OCI-LY7 (cell line): ENCODE measurements at regions of chr16 and their contacts with region 1.

Region 1: GRCh38 chr16:840561-841454 is 40.3 kb upstream of the GNG13 start:
- DNase-seq: no peak
- H3K4me3 ChIP-seq: no peak overlapping the region
- H3K27ac ChIP-seq: no peak overlapping the region
- H3K4me1 ChIP-seq: no peaks in the 10 kb centered on the region
- CTCF ChIP-seq: no peak

Region 2: DNA sequence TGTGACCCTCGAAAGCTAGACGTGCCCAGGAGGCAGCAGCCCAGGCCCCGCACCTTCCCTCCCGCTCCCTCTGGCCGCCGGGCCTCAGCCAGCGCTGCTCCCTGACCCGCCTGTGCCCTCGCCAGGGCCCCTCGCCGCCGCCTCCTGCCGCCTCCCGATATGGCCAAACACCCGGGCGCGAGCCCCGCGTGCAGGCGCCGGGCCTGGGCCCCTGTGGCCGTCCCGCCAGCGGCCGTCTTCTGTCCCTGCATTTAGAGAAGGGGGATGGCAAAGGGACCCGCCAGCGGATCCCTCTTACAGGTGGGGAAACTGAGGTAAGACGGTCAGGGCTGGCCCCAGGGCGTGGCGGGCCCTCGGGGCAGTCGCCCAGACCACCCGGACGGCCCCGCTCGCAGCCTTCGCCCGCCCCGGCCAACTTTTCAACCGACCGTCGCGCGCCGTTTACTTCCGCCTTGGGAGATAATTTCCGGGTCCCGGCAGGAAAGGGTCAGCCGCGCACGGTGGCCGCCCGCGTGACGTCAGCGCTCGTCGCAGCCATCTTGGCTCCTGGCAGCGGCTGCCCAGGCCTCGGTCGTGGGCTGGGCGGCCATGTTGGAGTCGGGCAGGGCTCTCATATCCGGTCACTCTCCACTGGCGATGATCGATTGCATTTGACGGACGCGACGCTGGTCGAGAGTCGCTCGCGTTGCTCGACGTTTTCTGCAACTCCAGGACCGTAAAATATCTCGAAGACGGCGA is 33.3 kb before region 1 on chr16:
- CTCF ChIA-PET with region 1: interaction called, 17 read pairs
- POLR2A ChIA-PET with region 1: no interaction called
- intact Hi-C with region 1: no loop called
- DNase-seq: peak; percentile 84
- H3K4me3 ChIP-seq: peak overlapping the region; percentile 69
- H3K27ac ChIP-seq: peak overlapping the region; percentile 41
- H3K4me1 ChIP-seq: no peaks in the 10 kb centered on the region
- CTCF ChIP-seq: no peak

Region 3: DNA sequence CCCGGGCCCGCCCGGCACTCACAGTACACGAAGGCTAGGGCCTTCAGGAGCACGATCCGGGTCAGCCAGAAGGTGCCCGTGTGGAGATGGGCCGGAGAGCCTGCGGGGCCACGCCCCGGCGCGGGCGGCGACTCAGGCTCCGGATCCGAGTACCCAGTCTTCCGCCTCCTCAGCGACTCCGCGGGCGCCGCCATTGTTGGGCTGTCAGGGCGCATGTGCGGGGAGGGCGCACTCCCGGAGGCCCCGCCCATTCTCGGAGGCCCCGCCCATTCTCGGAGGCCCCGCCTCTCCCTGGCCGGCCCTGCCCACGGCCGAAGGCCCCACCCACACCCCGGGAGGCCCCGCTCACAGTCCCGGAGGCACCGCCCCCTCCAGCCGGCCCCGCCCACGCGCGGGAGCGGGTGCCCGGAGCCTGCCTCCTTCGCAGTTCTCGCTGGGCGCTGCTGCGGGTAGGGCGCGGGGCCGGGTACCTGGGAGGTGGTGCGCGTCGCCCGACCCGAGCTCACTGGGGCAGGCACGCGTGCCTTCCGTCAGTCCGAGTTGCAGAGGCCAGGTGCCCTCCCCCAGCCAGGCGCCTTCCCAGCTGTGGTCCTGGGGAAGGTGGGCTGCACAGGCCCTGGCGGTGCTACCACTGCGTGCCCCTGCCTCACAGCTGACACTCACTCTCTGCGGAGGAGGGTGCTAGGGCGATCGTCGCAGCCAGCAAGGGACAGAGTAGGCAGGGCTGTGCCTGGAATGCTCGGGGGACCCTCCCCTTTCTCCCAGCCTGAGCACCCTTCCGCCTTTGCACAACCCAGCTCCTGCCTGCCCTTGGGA is 130.2 kb after region 1 on chr16 and contains the start of gene LMF1:
- CTCF ChIA-PET with region 1: no interaction called
- POLR2A ChIA-PET with region 1: no interaction called
- intact Hi-C with region 1: no loop called
- DNase-seq: peak; percentile 93
- H3K4me3 ChIP-seq: peak within 1 kb of the TSS; percentile 94
- H3K27ac ChIP-seq: peak within 1 kb of the TSS; percentile 44
- H3K4me1 ChIP-seq: peaks cover 39% of the 10 kb centered on the region
- CTCF ChIP-seq: no peak
- total RNA-seq, gene LMF1: 5.8 and 17.0 TPM in 2 replicates